HCT116 (cell line): ENCODE measurements at regions of chr6 and their contacts with region 1.

Region 1: GRCh38 chr6:110873981-110874879 is at the start of gene AMD1:
- DNase-seq: peak; percentile 92
- ATAC-seq: peak; percentile 88
- H3K4me3 ChIP-seq: peak within 1 kb of the TSS; percentile 66 to 86
- H3K27ac ChIP-seq: peak within 1 kb of the TSS; percentile 85
- H3K4me1 ChIP-seq: peaks cover 18 to 38% of the 10 kb centered on the region in 2 experiments
- H3K27me3 ChIP-seq: no peaks in the 10 kb centered on the region
- CTCF ChIP-seq: no peak
- POLR2A ChIP-seq: peak; percentile 99
- RAD21 ChIP-seq: no peak
- total RNA-seq, gene AMD1: 71.4 TPM

Region 2: GRCh38 chr6:110682460-110682853 is 191.8 kb before region 1 on chr6:
- CTCF ChIA-PET with region 1: interaction called, 10 read pairs
- POLR2A ChIA-PET with region 1: interaction called, 10 read pairs
- RAD21 ChIA-PET with region 1: interaction called in 1 of 2 experiments, 3 read pairs
- intact Hi-C with region 1: loop called (anchors 1 kb)
- DNase-seq: peak; percentile 77
- ATAC-seq: peak; percentile 99
- H3K4me3 ChIP-seq: no peak overlapping the region
- H3K27ac ChIP-seq: no peak overlapping the region
- H3K4me1 ChIP-seq: peaks cover 2 to 6% of the 10 kb centered on the region in 2 experiments; a peak in 3 of 4 replicates
- H3K27me3 ChIP-seq: no peaks in the 10 kb centered on the region
- CTCF ChIP-seq: peak; percentile 59 to 88 (median 80)
- POLR2A ChIP-seq: no peak
- RAD21 ChIP-seq: peak; percentile 96

Region 3: DNA sequence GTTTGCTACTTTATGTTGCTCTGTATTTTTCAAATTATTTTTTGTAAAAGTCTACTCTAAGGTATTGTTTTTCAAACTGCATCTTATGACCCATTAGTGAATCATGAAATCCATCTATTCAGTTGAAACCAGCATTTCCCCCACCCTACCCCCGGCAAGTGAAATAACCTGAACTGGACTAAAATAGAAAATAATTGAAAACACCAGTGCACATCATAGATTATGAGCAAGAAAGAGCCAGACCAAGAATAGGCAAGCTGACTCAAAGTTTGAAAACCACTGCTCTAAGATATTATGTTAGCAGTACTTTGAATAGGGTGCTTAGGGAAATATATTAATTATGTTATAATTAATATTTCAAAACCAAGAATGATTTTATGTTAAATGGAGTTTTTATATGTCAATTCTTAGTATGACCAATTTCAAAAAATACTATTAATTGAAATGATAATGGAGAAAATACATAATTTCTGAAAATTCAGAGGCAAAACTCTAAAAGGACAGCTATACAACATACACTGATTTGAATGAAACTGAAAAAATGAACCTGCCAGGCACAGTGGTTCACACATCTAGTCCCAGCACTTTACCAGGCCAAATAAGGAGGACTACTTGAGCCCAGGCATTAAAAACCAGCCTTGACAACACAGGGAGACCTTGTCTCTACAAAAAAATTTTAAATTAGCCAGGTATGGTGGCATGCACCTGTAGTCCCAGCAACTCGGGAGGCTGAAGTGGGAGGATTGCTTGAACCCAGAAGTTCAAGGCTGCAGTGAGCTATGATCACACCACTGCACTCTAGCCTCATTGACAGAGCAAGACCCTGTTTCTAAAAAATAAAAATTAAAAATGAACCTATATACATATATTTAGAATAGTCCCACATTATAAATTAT is 171.0 kb before region 1 on chr6:
- CTCF ChIA-PET with region 1: no interaction called
- POLR2A ChIA-PET with region 1: interaction called, 14 read pairs
- RAD21 ChIA-PET with region 1: no interaction called
- intact Hi-C with region 1: loop called (anchors 5 kb)
- DNase-seq: no peak
- ATAC-seq: no peak
- H3K4me3 ChIP-seq: no peak overlapping the region
- H3K27ac ChIP-seq: no peak overlapping the region
- H3K4me1 ChIP-seq: peaks cover 26 to 30% of the 10 kb centered on the region in 2 experiments
- H3K27me3 ChIP-seq: no peaks in the 10 kb centered on the region
- CTCF ChIP-seq: no peak
- POLR2A ChIP-seq: no peak
- RAD21 ChIP-seq: no peak

Region 4: GRCh38 chr6:110746680-110747079 is 127.5 kb before region 1 on chr6:
- CTCF ChIA-PET with region 1: no interaction called
- POLR2A ChIA-PET with region 1: no interaction called
- RAD21 ChIA-PET with region 1: no interaction called
- intact Hi-C with region 1: no loop called
- DNase-seq: no peak
- ATAC-seq: no peak
- H3K4me3 ChIP-seq: no peak overlapping the region
- H3K27ac ChIP-seq: no peak overlapping the region
- H3K4me1 ChIP-seq: no peaks in the 10 kb centered on the region
- H3K27me3 ChIP-seq: no peaks in the 10 kb centered on the region
- CTCF ChIP-seq: no peak
- POLR2A ChIP-seq: no peak
- RAD21 ChIP-seq: no peak

Region 5: DNA sequence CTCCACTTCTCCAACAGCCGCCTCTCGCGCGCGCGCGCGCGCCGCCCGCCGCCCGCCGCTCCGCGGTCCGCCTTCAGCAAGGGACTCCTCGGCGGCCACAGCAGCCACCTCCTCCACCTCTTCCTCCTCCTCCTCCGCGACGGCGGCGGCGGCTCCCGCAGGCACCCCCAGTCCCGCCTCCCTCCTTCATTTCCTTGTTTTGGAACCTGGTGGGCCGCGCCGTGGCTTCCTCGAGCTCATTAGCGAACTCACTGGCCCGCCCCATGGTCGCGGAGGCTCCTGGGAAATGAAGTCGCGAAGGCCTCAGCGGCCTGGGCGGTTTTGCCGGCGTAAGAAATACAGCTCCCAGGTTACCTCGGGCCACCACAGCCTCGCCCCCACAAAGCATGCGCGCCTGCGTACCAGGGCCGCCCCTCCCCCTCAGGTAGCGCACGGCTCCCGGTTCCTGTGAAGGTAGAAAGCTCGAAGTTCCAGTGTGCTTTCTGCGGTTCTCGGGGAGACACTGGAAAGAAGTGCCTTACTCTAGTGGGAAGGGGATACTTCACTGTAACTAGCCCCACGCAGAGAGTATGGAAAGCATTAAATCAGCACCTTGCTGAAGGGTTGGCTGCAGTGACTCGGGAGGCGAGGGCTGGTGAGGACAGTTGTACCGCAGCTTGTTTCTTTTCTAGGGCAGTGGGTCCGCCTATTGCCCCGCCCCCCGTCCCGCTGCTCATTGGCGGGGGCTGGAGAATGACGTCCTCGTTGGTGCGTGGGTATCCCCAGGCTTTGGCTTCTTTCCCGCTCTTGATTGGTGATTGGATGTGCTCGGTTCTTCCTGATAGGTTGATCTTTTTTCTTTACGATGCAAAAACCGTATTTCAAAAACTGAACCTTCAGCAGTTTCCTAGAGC is 58.8 kb before region 1 on chr6 and contains the start of gene CDK19:
- CTCF ChIA-PET with region 1: interaction called, 3 read pairs
- POLR2A ChIA-PET with region 1: interaction called, 43 read pairs
- RAD21 ChIA-PET with region 1: interaction called, 3 to 4 read pairs
- intact Hi-C with region 1: loop called (anchors 1 kb)
- DNase-seq: peak; percentile 97
- ATAC-seq: peak; percentile 88
- H3K4me3 ChIP-seq: peak within 1 kb of the TSS; percentile 79 to 88
- H3K27ac ChIP-seq: peak within 1 kb of the TSS; percentile 78
- H3K4me1 ChIP-seq: peaks cover 12 to 13% of the 10 kb centered on the region in 2 experiments; a peak in 3 of 4 replicates
- H3K27me3 ChIP-seq: no peaks in the 10 kb centered on the region
- CTCF ChIP-seq: no peak
- POLR2A ChIP-seq: peak; percentile 96
- RAD21 ChIP-seq: no peak
- total RNA-seq, gene CDK19: 20.0 TPM

Region 6: GRCh38 chr6:110856296-110856695 is 17.9 kb before region 1 on chr6:
- CTCF ChIA-PET with region 1: no interaction called
- POLR2A ChIA-PET with region 1: interaction called, 17 read pairs
- RAD21 ChIA-PET with region 1: no interaction called
- intact Hi-C with region 1: no loop called
- DNase-seq: no peak
- ATAC-seq: no peak
- H3K4me3 ChIP-seq: no peak overlapping the region
- H3K27ac ChIP-seq: no peak overlapping the region
- H3K4me1 ChIP-seq: peaks cover 3 to 8% of the 10 kb centered on the region in 2 experiments; a peak in 2 of 4 replicates
- H3K27me3 ChIP-seq: no peaks in the 10 kb centered on the region
- CTCF ChIP-seq: no peak
- POLR2A ChIP-seq: no peak
- RAD21 ChIP-seq: no peak

Region 7: DNA sequence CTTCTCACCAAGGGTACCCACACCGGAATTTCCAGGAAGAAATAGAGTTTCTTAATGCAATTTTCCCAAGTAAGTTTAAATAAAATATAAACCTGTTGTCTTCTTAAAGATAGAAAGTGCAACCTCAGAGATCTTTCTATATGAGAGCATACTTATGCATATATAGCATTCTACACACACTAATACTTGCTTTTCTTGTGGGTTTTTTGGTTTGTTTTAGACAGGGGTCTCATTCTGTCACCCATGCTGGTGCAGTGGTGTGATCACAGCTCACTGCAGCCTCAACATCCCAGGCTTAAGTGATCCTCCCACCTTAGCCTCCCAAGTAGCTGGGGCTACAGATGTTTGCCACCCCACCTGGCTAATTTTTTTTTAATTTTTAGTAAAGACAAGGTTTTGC is 16.1 kb after region 1 on chr6:
- CTCF ChIA-PET with region 1: interaction called, 3 read pairs
- POLR2A ChIA-PET with region 1: interaction called, 42 read pairs
- RAD21 ChIA-PET with region 1: no interaction called
- intact Hi-C with region 1: no loop called
- DNase-seq: no peak
- ATAC-seq: no peak
- H3K4me3 ChIP-seq: no peak overlapping the region
- H3K27ac ChIP-seq: no peak overlapping the region
- H3K4me1 ChIP-seq: no peaks in the 10 kb centered on the region
- H3K27me3 ChIP-seq: no peaks in the 10 kb centered on the region
- CTCF ChIP-seq: no peak
- POLR2A ChIP-seq: no peak
- RAD21 ChIP-seq: no peak